ENCODE measurements at regions of chr2 and their contacts with region 1.

Region 1: DNA sequence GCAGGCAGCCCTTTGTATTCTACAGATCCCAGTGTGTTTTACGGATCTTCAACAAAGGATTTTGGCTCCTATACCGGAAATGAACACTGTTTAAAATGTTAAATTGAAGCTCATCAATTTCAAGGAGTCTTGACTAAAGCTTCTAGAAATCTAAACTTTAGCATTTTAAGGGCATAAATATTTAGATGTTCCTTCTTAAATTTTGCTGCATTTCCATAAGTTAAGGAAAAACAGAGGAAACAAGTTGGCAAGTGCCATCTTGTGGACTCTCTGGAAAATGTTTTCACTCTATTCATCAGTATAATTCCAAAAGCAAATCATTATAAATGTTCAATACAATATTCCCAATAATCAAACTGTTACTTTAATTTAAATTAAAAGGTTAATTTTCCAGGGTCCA is 19.6 kb downstream of the CHN1 start:
- DNase-seq: no peak
- ATAC-seq: no peak
- H3K4me3 ChIP-seq: no peak overlapping the region
- H3K27ac ChIP-seq: no peak overlapping the region
- H3K4me1 ChIP-seq: no peaks in the 10 kb centered on the region; a peak in 2 of 4 replicates
- H3K27me3 ChIP-seq: no peaks in the 10 kb centered on the region
- CTCF ChIP-seq: peak; percentile 44 to 81 (median 64)
- POLR2A ChIP-seq: no peak
- RAD21 ChIP-seq: peak; percentile 77

Region 2: DNA sequence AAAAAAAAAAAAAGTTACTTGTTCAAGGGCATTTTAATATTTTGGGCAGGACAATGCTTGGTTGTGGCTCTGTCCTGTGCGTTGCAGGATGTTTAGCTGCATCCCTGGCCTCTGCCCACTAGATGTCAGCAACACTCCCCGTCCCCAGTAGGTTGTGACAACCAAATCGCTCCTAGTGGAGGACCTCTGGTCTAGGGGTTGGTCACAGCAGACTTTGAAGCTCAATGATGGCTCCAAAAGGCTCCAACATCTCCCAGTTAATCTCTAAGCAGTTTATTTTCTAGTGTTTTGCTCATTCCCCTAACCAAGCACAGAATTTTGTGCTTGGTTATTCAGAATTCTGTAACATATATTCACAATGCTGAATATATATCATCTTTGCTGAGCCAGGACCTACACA is 288.4 kb before region 1 on chr2:
- CTCF ChIA-PET with region 1: interaction called, 6 read pairs
- POLR2A ChIA-PET with region 1: no interaction called
- RAD21 ChIA-PET with region 1: interaction called in 1 of 2 experiments, 3 read pairs
- intact Hi-C with region 1: loop called (anchors 1 kb)
- DNase-seq: peak; percentile 59
- ATAC-seq: peak; percentile 100
- H3K4me3 ChIP-seq: no peak overlapping the region
- H3K27ac ChIP-seq: no peak overlapping the region
- H3K4me1 ChIP-seq: no peaks in the 10 kb centered on the region
- H3K27me3 ChIP-seq: peaks cover 3% of the 10 kb centered on the region; the same call in 1 of the 2 replicates
- CTCF ChIP-seq: peak; percentile 75 to 93 (median 84)
- POLR2A ChIP-seq: no peak
- RAD21 ChIP-seq: peak; percentile 70

Region 3: GRCh38 chr2:174771631-174772471 is 213.8 kb before region 1 on chr2:
- CTCF ChIA-PET with region 1: interaction called, 118 read pairs
- POLR2A ChIA-PET with region 1: interaction called, 4 read pairs
- RAD21 ChIA-PET with region 1: interaction called, 5 to 7 read pairs
- intact Hi-C with region 1: loop called (anchors 1 kb)
- DNase-seq: peak; percentile 44
- ATAC-seq: peak; percentile 98
- H3K4me3 ChIP-seq: no peak overlapping the region
- H3K27ac ChIP-seq: no peak overlapping the region
- H3K4me1 ChIP-seq: peaks cover 0 to 12% of the 10 kb centered on the region in 2 experiments; a peak in 2 of 4 replicates
- H3K27me3 ChIP-seq: no peaks in the 10 kb centered on the region
- CTCF ChIP-seq: peak; percentile 87 to 89 (median 87)
- POLR2A ChIP-seq: no peak
- RAD21 ChIP-seq: peak; percentile 93

Region 4: GRCh38 chr2:174931724-174932123 is 53.9 kb before region 1 on chr2:
- CTCF ChIA-PET with region 1: no interaction called
- POLR2A ChIA-PET with region 1: no interaction called
- RAD21 ChIA-PET with region 1: no interaction called
- intact Hi-C with region 1: no loop called
- DNase-seq: no peak
- ATAC-seq: no peak
- H3K4me3 ChIP-seq: no peak overlapping the region
- H3K27ac ChIP-seq: no peak overlapping the region
- H3K4me1 ChIP-seq: no peaks in the 10 kb centered on the region
- H3K27me3 ChIP-seq: no peaks in the 10 kb centered on the region
- CTCF ChIP-seq: no peak
- POLR2A ChIP-seq: no peak
- RAD21 ChIP-seq: no peak

Region 5: GRCh38 chr2:175025946-175026345 is 40.3 kb after region 1 on chr2:
- CTCF ChIA-PET with region 1: no interaction called
- POLR2A ChIA-PET with region 1: no interaction called
- RAD21 ChIA-PET with region 1: no interaction called
- intact Hi-C with region 1: no loop called
- DNase-seq: no peak
- ATAC-seq: no peak
- H3K4me3 ChIP-seq: no peak overlapping the region
- H3K27ac ChIP-seq: no peak overlapping the region
- H3K4me1 ChIP-seq: no peaks in the 10 kb centered on the region
- H3K27me3 ChIP-seq: no peaks in the 10 kb centered on the region
- CTCF ChIP-seq: no peak
- POLR2A ChIP-seq: no peak
- RAD21 ChIP-seq: no peak

Region 6: GRCh38 chr2:175871331-175872004 is 885.8 kb after region 1 on chr2:
- CTCF ChIA-PET with region 1: no interaction called
- POLR2A ChIA-PET with region 1: no interaction called
- RAD21 ChIA-PET with region 1: no interaction called
- intact Hi-C with region 1: no loop called
- DNase-seq: no peak
- ATAC-seq: no peak
- H3K4me3 ChIP-seq: no peak overlapping the region
- H3K27ac ChIP-seq: no peak overlapping the region
- H3K4me1 ChIP-seq: no peaks in the 10 kb centered on the region
- H3K27me3 ChIP-seq: no peaks in the 10 kb centered on the region
- CTCF ChIP-seq: no peak
- POLR2A ChIP-seq: no peak
- RAD21 ChIP-seq: no peak

Measured in HCT116 (cell line).